H1 (cell line): ENCODE measurements at regions of chr5 and their contacts with region 1.

Region 1: GRCh38 chr5:15683332-15683731 is 183.4 kb downstream of the FBXL7 start:
- DNase-seq: peak; percentile 39 to 76
- H3K4me3 ChIP-seq: no peak overlapping the region
- H3K27ac ChIP-seq: no peak overlapping the region
- H3K4me1 ChIP-seq: peaks cover 0 to 5% (median 2%) of the 10 kb centered on the region in 4 experiments; a peak in 3 of 7 replicates
- H3K27me3 ChIP-seq: no peaks in the 10 kb centered on the region
- CTCF ChIP-seq: peak; percentile 78 to 88 (median 82)
- EP300 ChIP-seq: no peak
- POLR2A ChIP-seq: no peak
- RAD21 ChIP-seq: peak; percentile 59 to 79

Region 2: DNA sequence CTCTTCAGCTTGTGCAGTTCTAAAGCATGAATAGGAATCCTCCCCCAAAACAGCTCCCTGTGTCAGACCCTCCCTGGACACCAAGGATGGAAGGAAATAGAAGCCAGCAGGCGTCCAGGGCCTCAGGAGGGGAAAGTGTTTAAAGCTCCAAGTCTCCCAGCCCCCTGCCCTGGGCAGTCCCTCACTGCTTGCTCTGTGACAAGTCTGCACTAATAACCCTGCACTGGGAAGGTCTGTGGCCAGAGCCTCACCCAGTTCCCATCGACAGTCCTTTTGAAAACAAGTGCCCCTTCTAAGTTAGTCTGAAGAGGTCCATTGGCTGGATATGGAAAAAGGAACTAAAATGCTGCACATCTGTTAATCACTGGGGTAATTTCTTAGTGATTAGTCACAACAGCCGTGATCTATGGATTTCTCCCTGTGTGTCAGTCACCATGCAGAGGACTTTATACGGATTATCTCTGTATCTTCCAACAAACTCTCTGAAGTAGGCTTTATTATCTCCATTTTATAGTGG is 11.9 kb after region 1 on chr5:
- CTCF ChIA-PET with region 1: interaction called, 16 read pairs
- POLR2A ChIA-PET with region 1: no interaction called
- DNase-seq: no peak
- H3K4me3 ChIP-seq: no peak overlapping the region
- H3K27ac ChIP-seq: no peak overlapping the region
- H3K4me1 ChIP-seq: peaks cover 0 to 11% (median 7%) of the 10 kb centered on the region in 4 experiments; a peak in 5 of 7 replicates
- H3K27me3 ChIP-seq: no peaks in the 10 kb centered on the region
- CTCF ChIP-seq: no peak
- EP300 ChIP-seq: no peak
- POLR2A ChIP-seq: no peak
- RAD21 ChIP-seq: no peak

Region 3: GRCh38 chr5:15791274-15791673 is 107.9 kb after region 1 on chr5:
- CTCF ChIA-PET with region 1: interaction called, 12 read pairs
- POLR2A ChIA-PET with region 1: no interaction called
- DNase-seq: no peak
- H3K4me3 ChIP-seq: no peak overlapping the region
- H3K27ac ChIP-seq: no peak overlapping the region
- H3K4me1 ChIP-seq: peaks cover 0 to 7% (median 4%) of the 10 kb centered on the region in 4 experiments; a peak in 3 of 7 replicates
- H3K27me3 ChIP-seq: no peaks in the 10 kb centered on the region
- CTCF ChIP-seq: no peak
- EP300 ChIP-seq: no peak
- POLR2A ChIP-seq: no peak
- RAD21 ChIP-seq: no peak